ENCODE measurements at regions of chr12 and their contacts with region 1.

Region 1: GRCh38 chr12:55797068-55797467 is 20.5 kb downstream of the SARNP start:
- DNase-seq: no peak
- H3K4me3 ChIP-seq: no peak overlapping the region
- H3K27ac ChIP-seq: no peak overlapping the region
- H3K4me1 ChIP-seq: no peaks in the 10 kb centered on the region
- H3K27me3 ChIP-seq: no peaks in the 10 kb centered on the region
- CTCF ChIP-seq: peak; percentile 55

Region 2: GRCh38 chr12:55757701-55758100 is 39.4 kb before region 1 on chr12:
- CTCF ChIA-PET with region 1: no interaction called
- POLR2A ChIA-PET with region 1: no interaction called
- intact Hi-C with region 1: loop called (anchors 5 kb)
- DNase-seq: no peak
- H3K4me3 ChIP-seq: no peak overlapping the region
- H3K27ac ChIP-seq: no peak overlapping the region
- H3K4me1 ChIP-seq: no peaks in the 10 kb centered on the region
- H3K27me3 ChIP-seq: no peaks in the 10 kb centered on the region
- CTCF ChIP-seq: no peak

Region 3: GRCh38 chr12:55829967-55830600 is 33.0 kb after region 1 on chr12:
- CTCF ChIA-PET with region 1: no interaction called
- POLR2A ChIA-PET with region 1: no interaction called
- intact Hi-C with region 1: no loop called
- DNase-seq: peak in 1 of 2 experiments; percentile 27
- H3K4me3 ChIP-seq: peak overlapping the region; percentile 96
- H3K27ac ChIP-seq: peak overlapping the region; percentile 36
- H3K4me1 ChIP-seq: peaks cover 39% of the 10 kb centered on the region
- H3K27me3 ChIP-seq: no peaks in the 10 kb centered on the region
- CTCF ChIP-seq: no peak

Region 4: DNA sequence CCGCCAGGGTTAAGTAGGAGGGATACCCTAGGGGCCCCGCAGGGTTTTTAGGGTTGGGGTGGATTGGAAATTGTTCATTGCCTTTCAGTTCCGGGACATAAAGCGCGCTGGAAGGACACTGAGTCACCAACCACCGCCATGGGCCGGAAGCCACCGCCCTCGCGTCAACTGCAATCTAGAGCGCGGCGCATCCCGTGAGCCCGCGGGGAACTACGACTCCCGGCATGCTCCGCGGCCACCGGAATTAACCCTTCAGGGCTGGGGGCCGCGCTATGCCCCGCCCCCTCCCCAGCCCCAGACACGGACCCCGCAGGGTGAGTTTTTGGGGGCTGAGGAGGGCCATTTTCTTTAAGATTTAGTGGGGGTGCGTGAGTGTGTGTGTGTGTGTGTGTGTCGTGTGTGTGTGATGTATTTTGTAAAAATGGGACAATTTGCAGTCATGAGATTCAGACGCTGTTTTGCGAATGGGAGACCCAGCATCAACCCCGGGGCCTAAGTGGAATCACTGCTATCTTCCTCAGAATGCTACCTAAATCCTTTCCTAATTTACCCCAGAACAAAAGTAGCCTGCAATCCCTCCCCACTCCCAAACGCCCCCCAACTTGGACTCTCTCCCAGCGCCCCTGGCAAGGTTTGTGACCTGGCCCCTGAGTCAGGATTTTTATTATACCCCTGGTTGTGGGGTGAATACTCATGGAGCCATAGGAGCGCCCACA is 355.4 kb after region 1 on chr12 and contains the start of gene MYL6B:
- CTCF ChIA-PET with region 1: no interaction called
- POLR2A ChIA-PET with region 1: no interaction called
- intact Hi-C with region 1: no loop called
- DNase-seq: peak; percentile 80 to 89
- H3K4me3 ChIP-seq: peak within 1 kb of the TSS; percentile 77
- H3K27ac ChIP-seq: peak within 1 kb of the TSS; percentile 83
- H3K4me1 ChIP-seq: peaks cover 29% of the 10 kb centered on the region
- H3K27me3 ChIP-seq: no peaks in the 10 kb centered on the region
- CTCF ChIP-seq: no peak
- total RNA-seq, gene MYL6B: 120 and 121 TPM in 2 replicates

Measured in PC-9 (cell line).